HCT116 (cell line): ENCODE measurements at regions of chr3 and their contacts with region 1.

Region 1: GRCh38 chr3:127455541-127456450 is 134.7 kb downstream of the TPRA1 start:
- DNase-seq: peak; percentile 34
- ATAC-seq: peak; percentile 99
- H3K4me3 ChIP-seq: peak overlapping the region; percentile 32 to 54
- H3K27ac ChIP-seq: no peak overlapping the region; the same call in 1 of the 2 replicates
- H3K4me1 ChIP-seq: peaks cover 0 to 13% of the 10 kb centered on the region in 2 experiments; a peak in 1 of 4 replicates
- H3K27me3 ChIP-seq: no peaks in the 10 kb centered on the region
- CTCF ChIP-seq: peak; percentile 84 to 99 (median 97)
- POLR2A ChIP-seq: no peak
- RAD21 ChIP-seq: peak; percentile 97

Region 2: DNA sequence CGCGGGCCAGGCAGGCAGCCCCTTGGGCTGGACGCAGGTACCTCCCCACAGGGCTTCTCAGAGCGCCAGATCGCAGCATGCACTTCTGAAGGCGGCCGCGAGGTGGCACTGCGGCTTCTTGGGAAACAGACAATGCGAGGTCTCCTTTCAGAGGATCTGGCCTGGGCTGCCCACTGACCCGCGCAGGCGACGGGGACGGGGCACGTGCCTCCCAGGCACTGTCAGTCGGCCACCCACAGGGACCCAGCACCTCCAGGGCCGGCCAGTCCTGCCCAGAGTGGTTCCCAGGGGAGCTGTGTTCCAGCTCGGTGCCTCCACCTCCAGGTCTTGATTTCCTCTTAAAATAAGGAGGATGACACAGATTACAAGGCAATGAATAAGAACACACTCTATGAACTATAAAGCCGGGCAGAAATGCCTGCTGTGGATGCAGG is 776.5 kb before region 1 on chr3:
- CTCF ChIA-PET with region 1: interaction called, 4 read pairs
- POLR2A ChIA-PET with region 1: no interaction called
- RAD21 ChIA-PET with region 1: no interaction called
- intact Hi-C with region 1: loop called (anchors 1 kb)
- DNase-seq: peak; percentile 68
- ATAC-seq: peak; percentile 99
- H3K4me3 ChIP-seq: no peak overlapping the region
- H3K27ac ChIP-seq: no peak overlapping the region
- H3K4me1 ChIP-seq: peaks cover 0 to 8% of the 10 kb centered on the region in 2 experiments; a peak in 1 of 4 replicates
- H3K27me3 ChIP-seq: no peaks in the 10 kb centered on the region
- CTCF ChIP-seq: peak; percentile 90 to 91 (median 90)
- POLR2A ChIP-seq: no peak
- RAD21 ChIP-seq: peak; percentile 93

Region 3: GRCh38 chr3:126752303-126752842 is 703.4 kb before region 1 on chr3:
- CTCF ChIA-PET with region 1: interaction called, 14 read pairs
- POLR2A ChIA-PET with region 1: no interaction called
- RAD21 ChIA-PET with region 1: no interaction called
- intact Hi-C with region 1: loop called (anchors 1 kb)
- DNase-seq: peak; percentile 38
- ATAC-seq: peak; percentile 99
- H3K4me3 ChIP-seq: no peak overlapping the region
- H3K27ac ChIP-seq: no peak overlapping the region
- H3K4me1 ChIP-seq: no peaks in the 10 kb centered on the region
- H3K27me3 ChIP-seq: no peaks in the 10 kb centered on the region
- CTCF ChIP-seq: peak; percentile 87 to 96 (median 91)
- POLR2A ChIP-seq: no peak
- RAD21 ChIP-seq: peak; percentile 96

Region 4: GRCh38 chr3:126982471-126983175 is 473.2 kb before region 1 on chr3 and contains the start of gene PLXNA1:
- CTCF ChIA-PET with region 1: interaction called, 10 read pairs
- POLR2A ChIA-PET with region 1: no interaction called
- RAD21 ChIA-PET with region 1: interaction called in 1 of 2 experiments, 7 read pairs
- intact Hi-C with region 1: loop called (anchors 10 kb)
- DNase-seq: peak; percentile 64
- ATAC-seq: peak; percentile 85
- H3K4me3 ChIP-seq: peak within 1 kb of the TSS; percentile 67 to 74
- H3K27ac ChIP-seq: peak within 1 kb of the TSS; percentile 67; the same call in 1 of the 2 replicates
- H3K4me1 ChIP-seq: peaks cover 2 to 19% of the 10 kb centered on the region in 2 experiments; a peak in 3 of 4 replicates
- H3K27me3 ChIP-seq: no peaks in the 10 kb centered on the region
- CTCF ChIP-seq: peak; percentile 81 to 97 (median 91)
- POLR2A ChIP-seq: peak; percentile 48
- RAD21 ChIP-seq: peak; percentile 66
- total RNA-seq, gene PLXNA1: 30.3 TPM

Region 5: GRCh38 chr3:127254730-127255129 is 201.1 kb before region 1 on chr3:
- CTCF ChIA-PET with region 1: interaction called, 13 read pairs
- POLR2A ChIA-PET with region 1: no interaction called
- RAD21 ChIA-PET with region 1: interaction called, 3 to 4 read pairs
- intact Hi-C with region 1: loop called (anchors 1 kb)
- DNase-seq: peak; percentile 15
- ATAC-seq: peak; percentile 91
- H3K4me3 ChIP-seq: no peak overlapping the region
- H3K27ac ChIP-seq: no peak overlapping the region
- H3K4me1 ChIP-seq: no peaks in the 10 kb centered on the region
- H3K27me3 ChIP-seq: no peaks in the 10 kb centered on the region
- CTCF ChIP-seq: peak; percentile 49 to 65 (median 64); a peak in 4 of 6 replicates
- POLR2A ChIP-seq: no peak
- RAD21 ChIP-seq: peak; percentile 72

Region 6: DNA sequence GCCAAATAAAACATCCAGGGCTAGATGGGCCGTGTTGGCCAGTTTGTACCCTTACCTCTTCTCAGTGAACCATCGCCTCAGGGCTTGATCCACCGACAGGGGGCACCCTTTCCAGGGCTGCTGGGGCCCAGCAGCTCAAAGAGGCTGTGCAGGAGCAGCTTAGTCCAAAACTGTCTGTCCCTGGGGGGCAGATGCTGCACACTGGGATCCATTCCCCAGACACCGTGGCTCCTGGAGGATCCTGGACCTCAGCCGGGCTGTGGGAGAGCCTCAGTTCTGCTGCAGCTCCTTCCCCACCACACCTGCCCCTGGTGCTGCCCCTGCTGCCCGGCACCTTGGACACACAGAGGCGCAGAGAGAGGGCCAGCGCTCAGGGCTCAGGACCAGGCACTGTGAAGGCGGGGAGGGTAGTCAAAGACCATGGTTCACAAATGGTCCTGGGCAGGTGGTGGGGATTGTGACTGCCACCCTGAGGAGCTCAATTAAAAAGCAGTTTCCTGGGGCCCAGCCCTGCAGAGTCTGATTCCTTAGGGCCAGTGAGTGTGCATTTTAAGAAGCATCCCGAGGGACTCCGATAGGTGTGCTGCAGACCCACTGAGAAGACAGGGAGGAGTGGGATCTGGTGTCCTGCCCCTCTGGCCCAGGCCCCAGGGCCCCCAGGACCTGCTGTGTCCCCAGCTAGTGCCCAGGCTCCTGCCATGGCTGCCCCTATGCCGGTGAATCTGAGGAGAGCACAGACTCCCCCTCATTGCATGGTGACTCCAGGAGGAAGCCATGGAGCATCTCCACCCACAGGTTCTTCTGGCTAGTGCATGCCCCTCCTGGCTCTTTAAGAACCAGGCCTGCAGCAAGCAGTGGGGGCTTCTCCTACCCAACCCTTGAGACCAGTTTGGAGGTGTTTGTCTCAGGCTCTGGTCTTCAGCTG is 81.4 kb before region 1 on chr3:
- CTCF ChIA-PET with region 1: interaction called, 16 read pairs
- POLR2A ChIA-PET with region 1: no interaction called
- RAD21 ChIA-PET with region 1: interaction called, 4 to 8 read pairs
- intact Hi-C with region 1: loop called (anchors 1 kb)
- DNase-seq: peak; percentile 8
- ATAC-seq: peak; percentile 90
- H3K4me3 ChIP-seq: no peak overlapping the region
- H3K27ac ChIP-seq: no peak overlapping the region
- H3K4me1 ChIP-seq: no peaks in the 10 kb centered on the region
- H3K27me3 ChIP-seq: peaks cover 5% of the 10 kb centered on the region; the same call in 1 of the 2 replicates
- CTCF ChIP-seq: peak; percentile 66 to 83 (median 72)
- POLR2A ChIP-seq: no peak
- RAD21 ChIP-seq: peak; percentile 64